GM13977 (cell line): ENCODE measurements at regions of chrX and their contacts with region 1.

Region 1: GRCh38 chrX:73855546-73855945 is 292.5 kb downstream of the CHIC1 start:
- DNase-seq: peak; percentile 57
- CTCF ChIP-seq: peak; percentile 84

Region 2: GRCh38 chrX:74015379-74016019 is 160.0 kb after region 1 on chrX:
- in situ Hi-C with region 1: loop called (anchors 5 kb)
- DNase-seq: peak; percentile 69
- CTCF ChIP-seq: peak; percentile 87

Region 3: DNA sequence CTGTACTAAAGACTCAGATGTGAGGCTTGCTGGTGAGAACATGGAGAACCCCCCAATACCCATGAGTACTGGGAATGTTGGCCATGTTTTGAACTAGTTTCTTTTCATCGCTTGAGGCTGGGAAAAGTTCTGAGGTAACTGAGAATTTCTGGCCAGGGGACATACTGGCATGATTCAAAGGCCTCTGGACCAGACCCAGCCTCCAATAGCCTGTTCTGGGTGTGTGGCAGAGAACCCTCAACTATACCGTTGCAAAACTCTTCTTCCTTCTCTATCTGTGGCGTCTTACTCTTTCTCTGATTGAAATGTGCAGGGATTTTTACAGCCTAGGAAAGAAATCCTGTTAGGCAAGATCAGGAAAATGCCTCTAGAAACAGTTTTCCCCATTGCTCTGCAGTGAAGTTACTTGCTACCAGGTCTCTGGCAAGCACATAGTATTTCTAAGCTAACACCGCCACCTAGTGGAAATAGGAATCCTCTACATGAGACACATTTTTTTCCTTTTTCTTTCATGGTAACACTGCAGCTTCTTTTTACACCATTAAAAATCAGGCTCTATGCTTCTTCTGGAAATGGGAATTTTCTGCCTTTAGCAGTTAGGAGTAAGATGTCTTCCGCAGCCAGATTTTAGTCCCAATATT is 277.7 kb after region 1 on chrX:
- in situ Hi-C with region 1: loop called (anchors 25 kb)
- DNase-seq: peak; percentile 60
- CTCF ChIP-seq: peak; percentile 71

Region 4: DNA sequence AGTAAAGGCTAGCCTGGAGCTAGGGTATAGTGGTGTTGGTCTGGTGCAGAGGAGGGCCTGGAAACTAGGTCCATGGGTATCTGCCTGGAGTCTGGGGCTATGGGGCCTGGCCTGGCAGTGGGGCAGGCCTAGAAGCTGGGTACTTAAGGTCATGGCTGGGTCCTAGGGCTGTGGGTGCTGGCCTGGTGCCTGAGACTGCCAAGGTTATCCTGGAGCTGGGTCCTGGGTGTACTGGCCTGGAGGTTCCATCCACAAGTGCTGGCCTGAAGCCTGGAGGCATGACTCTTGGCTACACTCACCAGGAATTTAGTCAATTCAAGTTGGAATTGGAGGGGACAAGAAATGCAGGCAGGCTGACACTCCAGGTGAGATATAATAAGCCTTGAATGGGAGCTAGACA is 340.1 kb after region 1 on chrX:
- in situ Hi-C with region 1: no loop called
- DNase-seq: no peak
- CTCF ChIP-seq: no peak

Region 5: GRCh38 chrX:74343343-74344279 is 488.1 kb after region 1 on chrX:
- in situ Hi-C with region 1: loop called (anchors 25 kb)
- DNase-seq: peak; percentile 47
- CTCF ChIP-seq: peak; percentile 75